Activated naive CD4-positive, alpha-beta T cell treated with anti-CD3 and anti-CD28 coated beads for 36 hours (primary cell): ENCODE measurements at regions of chr1 and their contacts with region 1.

Region 1: GRCh38 chr1:154404984-154405761 is at the start of gene IL6R:
- DNase-seq: peak; percentile 87
- H3K4me3 Mint-ChIP-seq: peak within 1 kb of the TSS; percentile 94
- H3K27ac Mint-ChIP-seq: peak within 1 kb of the TSS; percentile 96
- H3K4me1 Mint-ChIP-seq: peaks cover 77% of the 10 kb centered on the region
- H3K27me3 Mint-ChIP-seq: no peaks in the 10 kb centered on the region
- total RNA-seq, gene IL6R: 17.3 to 25.9 TPM

Region 2: DNA sequence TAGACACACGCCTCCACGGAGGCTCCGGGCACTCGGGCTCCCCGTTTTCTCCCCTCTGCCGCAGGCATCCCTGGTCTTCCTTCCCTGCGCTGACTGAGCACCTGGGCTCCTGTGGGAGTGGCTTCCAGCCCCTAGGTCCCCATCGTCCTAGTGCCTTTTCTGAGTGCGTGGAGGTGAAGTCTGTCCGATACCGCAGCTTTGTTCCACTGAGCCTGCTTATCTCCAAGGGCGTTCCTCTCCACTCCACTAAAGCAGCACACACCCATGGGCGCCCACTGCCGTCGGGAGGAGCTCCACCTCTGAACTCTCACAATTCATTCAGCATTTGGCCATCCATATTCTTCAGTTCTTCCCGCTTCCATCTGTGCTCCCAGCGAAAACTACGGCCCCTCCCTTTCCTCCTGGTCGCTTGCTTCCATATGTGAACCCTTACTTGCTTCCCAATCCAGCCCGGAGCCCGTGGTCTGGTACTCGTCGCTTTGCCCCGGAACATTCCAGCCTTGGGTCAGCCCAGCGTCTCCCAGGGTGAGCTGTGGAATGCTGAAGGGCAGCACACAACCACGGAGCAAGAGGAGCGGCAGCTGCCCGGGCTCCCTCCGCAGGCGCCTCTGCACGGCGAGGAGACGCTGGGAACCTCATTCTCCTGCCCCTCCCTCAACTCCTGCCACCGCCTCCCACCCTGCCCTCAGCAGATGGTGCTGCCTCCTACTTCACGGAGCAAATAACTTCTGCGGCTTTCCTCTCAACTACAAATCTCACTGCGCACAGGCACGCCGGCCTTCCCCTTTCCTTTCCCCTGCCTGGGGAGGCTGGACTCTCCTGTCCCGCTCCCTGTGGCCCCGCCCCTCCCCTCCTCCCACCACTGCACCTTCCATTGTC is 52.4 kb before region 1 on chr1:
- CTCF ChIA-PET with region 1: interaction called, 9 read pairs
- intact Hi-C with region 1: loop called (anchors 1 kb)
- DNase-seq: peak; percentile 85
- H3K4me3 Mint-ChIP-seq: peak overlapping the region; percentile 82
- H3K27ac Mint-ChIP-seq: peak overlapping the region; percentile 76
- H3K4me1 Mint-ChIP-seq: peaks cover 31% of the 10 kb centered on the region
- H3K27me3 Mint-ChIP-seq: no peaks in the 10 kb centered on the region

Region 3: GRCh38 chr1:154419620-154420571 is 14.7 kb after region 1 on chr1:
- CTCF ChIA-PET with region 1: interaction called, 26 read pairs
- intact Hi-C with region 1: loop called (anchors 1 kb)
- DNase-seq: peak; percentile 90
- H3K4me3 Mint-ChIP-seq: peak overlapping the region; percentile 52
- H3K27ac Mint-ChIP-seq: peak overlapping the region; percentile 88
- H3K4me1 Mint-ChIP-seq: peaks cover 85% of the 10 kb centered on the region
- H3K27me3 Mint-ChIP-seq: no peaks in the 10 kb centered on the region

Region 4: GRCh38 chr1:154463512-154463990 is 58.4 kb after region 1 on chr1:
- CTCF ChIA-PET with region 1: interaction called, 4 read pairs
- intact Hi-C with region 1: loop called (anchors 1 kb)
- DNase-seq: peak; percentile 89
- H3K4me3 Mint-ChIP-seq: no peak overlapping the region
- H3K27ac Mint-ChIP-seq: peak overlapping the region; percentile 78
- H3K4me1 Mint-ChIP-seq: peaks cover 73% of the 10 kb centered on the region
- H3K27me3 Mint-ChIP-seq: no peaks in the 10 kb centered on the region

Region 5: DNA sequence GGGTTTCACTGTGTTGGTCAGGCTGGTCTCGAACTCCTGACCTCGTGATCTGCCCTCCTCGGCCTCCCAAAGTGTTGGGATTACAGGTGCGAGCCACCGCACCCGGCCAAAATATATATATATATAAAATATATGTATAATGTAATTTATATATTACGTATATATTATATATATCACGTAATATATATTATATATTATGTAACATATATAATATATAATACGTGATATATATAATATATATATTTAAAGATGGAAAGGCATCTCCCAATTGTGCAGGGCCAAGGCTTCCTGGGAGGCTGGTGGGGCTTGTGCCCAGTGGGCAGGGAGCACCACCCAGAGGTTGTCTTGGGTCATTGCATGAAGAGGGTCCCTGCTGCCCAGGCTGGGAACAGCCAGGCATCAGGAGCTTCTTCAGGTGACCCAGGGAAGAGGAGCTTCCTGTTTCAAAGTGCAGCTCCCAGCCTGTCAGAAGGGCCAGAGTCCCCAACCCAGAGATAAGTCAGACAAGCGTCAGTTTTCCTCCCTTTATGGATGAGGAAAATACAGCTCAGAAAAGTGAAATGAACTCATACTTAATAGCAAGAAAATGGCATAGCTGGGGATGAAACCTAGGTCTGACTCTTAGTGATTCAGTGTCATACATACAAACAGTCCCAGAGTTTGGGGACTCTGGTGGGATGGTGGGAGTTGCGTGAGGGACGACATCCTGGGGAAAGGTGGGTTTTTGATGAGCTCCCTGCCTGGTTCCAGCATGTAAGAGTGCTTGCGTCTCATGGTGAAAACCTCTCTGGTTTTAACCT is 141.3 kb after region 1 on chr1:
- CTCF ChIA-PET with region 1: interaction called, 6 read pairs
- intact Hi-C with region 1: loop called (anchors 1 kb)
- DNase-seq: peak; percentile 77
- H3K4me3 Mint-ChIP-seq: no peak overlapping the region
- H3K27ac Mint-ChIP-seq: no peak overlapping the region
- H3K4me1 Mint-ChIP-seq: peaks cover 21% of the 10 kb centered on the region
- H3K27me3 Mint-ChIP-seq: no peaks in the 10 kb centered on the region

Region 6: GRCh38 chr1:154760469-154760933 is 355.3 kb after region 1 on chr1:
- CTCF ChIA-PET with region 1: no interaction called
- intact Hi-C with region 1: loop called (anchors 5 kb)
- DNase-seq: peak; percentile 85
- H3K4me3 Mint-ChIP-seq: peak overlapping the region; percentile 75
- H3K27ac Mint-ChIP-seq: peak overlapping the region; percentile 99
- H3K4me1 Mint-ChIP-seq: peaks cover 56% of the 10 kb centered on the region
- H3K27me3 Mint-ChIP-seq: no peaks in the 10 kb centered on the region